Ascending aorta (tissue), 2 donors: ENCODE measurements at regions of chr18 and their contacts with region 1.

Region 1: DNA sequence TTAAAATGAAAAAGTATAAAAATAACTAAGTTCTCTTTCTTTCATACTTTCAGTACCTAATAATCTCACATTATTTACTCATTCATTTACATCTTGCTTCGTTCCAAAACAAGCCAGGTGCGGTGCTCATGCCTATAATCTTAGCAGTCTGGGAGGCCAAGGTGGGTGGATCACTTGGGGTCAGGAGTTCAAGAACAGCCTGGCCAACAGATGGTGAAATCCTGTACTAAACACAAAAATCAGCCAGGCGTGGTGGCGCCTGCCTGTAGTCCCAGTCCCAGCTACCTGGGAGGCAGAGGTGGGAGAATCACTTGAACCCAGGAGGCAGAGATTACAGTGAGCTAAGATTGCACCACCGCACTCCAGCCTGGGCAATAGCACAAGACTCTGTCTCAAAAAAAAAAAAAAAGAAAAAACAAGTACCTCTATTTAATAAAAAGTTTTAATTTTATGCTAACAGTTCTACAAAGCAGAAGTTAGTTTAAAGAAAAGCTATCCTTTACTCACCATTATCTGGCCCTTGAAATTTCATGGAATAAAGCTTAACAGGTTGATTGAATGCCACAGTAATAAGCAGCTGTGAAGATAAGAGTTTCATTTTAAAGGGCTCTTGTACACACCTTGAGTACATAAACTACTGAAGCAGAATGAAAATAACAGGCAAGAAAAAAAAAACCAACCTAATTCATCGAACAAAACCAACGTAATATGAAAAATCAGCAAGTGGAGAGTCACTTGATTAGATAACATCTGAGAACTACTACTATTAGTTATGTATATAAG is 22.5 kb downstream of the TXNL1 start:
- DNase-seq: no peak
- H3K4me3 ChIP-seq: no peak overlapping the region
- H3K27ac ChIP-seq: no peak overlapping the region
- H3K4me1 ChIP-seq: no peaks in the 10 kb centered on the region
- H3K27me3 ChIP-seq: no peaks in the 10 kb centered on the region
- CTCF ChIP-seq: no peak

Region 2: DNA sequence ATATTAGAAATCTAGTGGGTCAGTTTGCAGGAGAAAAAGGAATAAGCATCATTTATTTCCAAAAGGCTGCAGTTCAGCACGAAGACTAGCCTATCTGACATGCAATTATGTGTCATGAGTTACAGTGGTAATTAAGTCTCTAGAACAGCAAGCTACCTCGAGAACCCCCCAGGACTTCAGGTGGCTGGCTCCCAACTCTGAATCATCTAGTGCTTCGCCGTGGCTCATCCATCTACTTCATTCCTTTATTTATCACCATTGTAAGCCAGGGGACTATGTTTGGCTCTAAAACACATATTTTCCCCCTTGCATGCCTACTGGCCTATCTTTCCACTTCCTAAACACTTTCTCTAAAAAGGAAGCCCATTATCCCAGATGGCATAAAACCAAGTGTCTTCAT is 99.1 kb before region 1 on chr18:
- intact Hi-C with region 1: no loop called
- DNase-seq: no peak
- H3K4me3 ChIP-seq: no peak overlapping the region
- H3K27ac ChIP-seq: no peak overlapping the region
- H3K4me1 ChIP-seq: no peaks in the 10 kb centered on the region
- H3K27me3 ChIP-seq: no peaks in the 10 kb centered on the region
- CTCF ChIP-seq: no peak

Region 3: GRCh38 chr18:56661360-56662062 is 45.6 kb after region 1 on chr18:
- intact Hi-C with region 1: loop called (anchors 10 kb)
- DNase-seq: no peak
- H3K4me3 ChIP-seq: no peak overlapping the region
- H3K27ac ChIP-seq: no peak overlapping the region
- H3K4me1 ChIP-seq: no peaks in the 10 kb centered on the region
- H3K27me3 ChIP-seq: no peaks in the 10 kb centered on the region
- CTCF ChIP-seq: no peak